ENCODE measurements at regions of chr6 and their contacts with region 1.

Region 1: GRCh38 chr6:55399351-55399750 is 72.1 kb downstream of the GFRAL start:
- DNase-seq: no peak
- H3K4me3 ChIP-seq: no peak overlapping the region
- H3K27ac ChIP-seq: no peak overlapping the region
- H3K4me1 ChIP-seq: no peaks in the 10 kb centered on the region
- H3K27me3 ChIP-seq: no peaks in the 10 kb centered on the region
- CTCF ChIP-seq: no peak

Region 2: GRCh38 chr6:54579011-54579410 is 820.3 kb before region 1 on chr6:
- intact Hi-C with region 1: no loop called
- DNase-seq: no peak
- H3K4me3 ChIP-seq: no peak overlapping the region
- H3K27ac ChIP-seq: no peak overlapping the region
- H3K4me1 ChIP-seq: peaks cover 0 to 9% (median 0%) of the 10 kb centered on the region in 4 donors
- H3K27me3 ChIP-seq: no peaks in the 10 kb centered on the region
- CTCF ChIP-seq: no peak

Region 3: DNA sequence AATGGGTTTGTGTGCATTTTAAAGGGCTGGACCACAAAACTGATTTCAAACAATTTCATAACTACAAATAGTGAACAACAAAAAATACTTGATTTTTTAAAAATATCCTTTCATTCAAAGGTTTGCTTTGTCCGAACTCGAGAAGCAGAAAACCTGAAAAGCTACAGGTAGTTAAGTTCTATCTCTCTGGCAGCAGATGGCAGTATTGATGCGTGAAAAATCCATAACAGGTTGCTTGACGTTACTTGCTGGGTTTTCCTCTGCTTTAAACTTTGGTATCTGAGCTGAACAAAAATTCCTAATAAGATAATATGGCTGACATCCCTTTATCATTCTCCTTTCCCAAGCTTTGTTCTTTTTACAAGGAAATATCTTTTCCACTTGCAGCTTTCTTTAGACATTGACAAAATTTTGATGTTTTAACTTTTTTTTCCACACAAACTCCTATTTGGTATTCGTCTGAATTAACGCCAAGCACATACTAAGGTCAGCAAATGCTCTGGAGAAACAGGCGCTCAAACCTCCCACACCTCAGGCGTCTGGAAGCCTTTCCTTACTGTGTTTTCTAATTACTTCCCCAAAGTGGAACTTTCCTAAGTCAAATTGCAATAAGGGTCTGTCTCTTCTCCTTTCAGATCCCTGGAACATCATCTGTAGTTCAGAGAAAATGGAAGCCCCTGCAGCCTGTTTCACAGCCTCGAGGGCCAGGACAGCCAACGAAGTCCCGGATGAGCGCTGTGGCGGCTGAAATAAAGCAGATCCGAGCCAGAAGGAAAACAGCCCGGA is 122.4 kb before region 1 on chr6:
- intact Hi-C with region 1: no loop called
- DNase-seq: no peak
- H3K4me3 ChIP-seq: no peak overlapping the region
- H3K27ac ChIP-seq: no peak overlapping the region
- H3K4me1 ChIP-seq: no peaks in the 10 kb centered on the region
- H3K27me3 ChIP-seq: no peaks in the 10 kb centered on the region
- CTCF ChIP-seq: peak; percentile 20 to 30

Region 4: GRCh38 chr6:56188429-56188828 is 789.1 kb after region 1 on chr6:
- intact Hi-C with region 1: loop called (anchors 5 kb)
- DNase-seq: no peak
- H3K4me3 ChIP-seq: no peak overlapping the region
- H3K27ac ChIP-seq: no peak overlapping the region
- H3K4me1 ChIP-seq: no peaks in the 10 kb centered on the region
- H3K27me3 ChIP-seq: no peaks in the 10 kb centered on the region
- CTCF ChIP-seq: no peak